PC-9 (cell line): ENCODE measurements at regions of chr12 and their contacts with region 1.

Region 1: GRCh38 chr12:21949036-21949435 is 7.8 kb upstream of the ABCC9 start:
- DNase-seq: no peak
- H3K4me3 ChIP-seq: no peak overlapping the region
- H3K27ac ChIP-seq: no peak overlapping the region
- H3K4me1 ChIP-seq: no peaks in the 10 kb centered on the region
- H3K27me3 ChIP-seq: no peaks in the 10 kb centered on the region
- CTCF ChIP-seq: no peak

Region 2: GRCh38 chr12:21697904-21698630 is 251.0 kb before region 1 on chr12:
- CTCF ChIA-PET with region 1: no interaction called
- POLR2A ChIA-PET with region 1: no interaction called
- intact Hi-C with region 1: no loop called
- DNase-seq: no peak
- H3K4me3 ChIP-seq: no peak overlapping the region
- H3K27ac ChIP-seq: no peak overlapping the region
- H3K4me1 ChIP-seq: no peaks in the 10 kb centered on the region
- H3K27me3 ChIP-seq: no peaks in the 10 kb centered on the region
- CTCF ChIP-seq: peak; percentile 84

Region 3: GRCh38 chr12:22034709-22035506 is 85.9 kb after region 1 on chr12:
- CTCF ChIA-PET with region 1: no interaction called
- POLR2A ChIA-PET with region 1: no interaction called
- intact Hi-C with region 1: no loop called
- DNase-seq: no peak
- H3K4me3 ChIP-seq: no peak overlapping the region
- H3K27ac ChIP-seq: no peak overlapping the region
- H3K4me1 ChIP-seq: peaks cover 13% of the 10 kb centered on the region; the same call in 1 of the 2 replicates
- H3K27me3 ChIP-seq: no peaks in the 10 kb centered on the region
- CTCF ChIP-seq: no peak

Region 4: GRCh38 chr12:23415180-23415579 is 1466.1 kb after region 1 on chr12:
- CTCF ChIA-PET with region 1: no interaction called
- POLR2A ChIA-PET with region 1: interaction called, 10 read pairs
- intact Hi-C with region 1: no loop called
- DNase-seq: no peak
- H3K4me3 ChIP-seq: no peak overlapping the region
- H3K27ac ChIP-seq: no peak overlapping the region
- H3K4me1 ChIP-seq: no peaks in the 10 kb centered on the region
- H3K27me3 ChIP-seq: no peaks in the 10 kb centered on the region
- CTCF ChIP-seq: no peak